ENCODE measurements at regions of chr2 and their contacts with region 1.

Region 1: GRCh38 chr2:209960676-209961630 is 41.5 kb upstream of the RPE start:
- DNase-seq: peak; percentile 60
- H3K4me3 Mint-ChIP-seq: no peak overlapping the region
- H3K27ac Mint-ChIP-seq: no peak overlapping the region
- H3K4me1 Mint-ChIP-seq: peaks cover 9% of the 10 kb centered on the region
- H3K27me3 Mint-ChIP-seq: no peaks in the 10 kb centered on the region
- CTCF ChIP-seq: peak; percentile 67

Region 2: GRCh38 chr2:209334198-209335017 is 626.5 kb before region 1 on chr2:
- CTCF ChIA-PET with region 1: interaction called, 3 read pairs
- intact Hi-C with region 1: loop called (anchors 10 kb)
- DNase-seq: peak; percentile 70
- H3K4me3 Mint-ChIP-seq: no peak overlapping the region
- H3K27ac Mint-ChIP-seq: no peak overlapping the region
- H3K4me1 Mint-ChIP-seq: no peaks in the 10 kb centered on the region
- H3K27me3 Mint-ChIP-seq: no peaks in the 10 kb centered on the region
- CTCF ChIP-seq: peak; percentile 82

Region 3: DNA sequence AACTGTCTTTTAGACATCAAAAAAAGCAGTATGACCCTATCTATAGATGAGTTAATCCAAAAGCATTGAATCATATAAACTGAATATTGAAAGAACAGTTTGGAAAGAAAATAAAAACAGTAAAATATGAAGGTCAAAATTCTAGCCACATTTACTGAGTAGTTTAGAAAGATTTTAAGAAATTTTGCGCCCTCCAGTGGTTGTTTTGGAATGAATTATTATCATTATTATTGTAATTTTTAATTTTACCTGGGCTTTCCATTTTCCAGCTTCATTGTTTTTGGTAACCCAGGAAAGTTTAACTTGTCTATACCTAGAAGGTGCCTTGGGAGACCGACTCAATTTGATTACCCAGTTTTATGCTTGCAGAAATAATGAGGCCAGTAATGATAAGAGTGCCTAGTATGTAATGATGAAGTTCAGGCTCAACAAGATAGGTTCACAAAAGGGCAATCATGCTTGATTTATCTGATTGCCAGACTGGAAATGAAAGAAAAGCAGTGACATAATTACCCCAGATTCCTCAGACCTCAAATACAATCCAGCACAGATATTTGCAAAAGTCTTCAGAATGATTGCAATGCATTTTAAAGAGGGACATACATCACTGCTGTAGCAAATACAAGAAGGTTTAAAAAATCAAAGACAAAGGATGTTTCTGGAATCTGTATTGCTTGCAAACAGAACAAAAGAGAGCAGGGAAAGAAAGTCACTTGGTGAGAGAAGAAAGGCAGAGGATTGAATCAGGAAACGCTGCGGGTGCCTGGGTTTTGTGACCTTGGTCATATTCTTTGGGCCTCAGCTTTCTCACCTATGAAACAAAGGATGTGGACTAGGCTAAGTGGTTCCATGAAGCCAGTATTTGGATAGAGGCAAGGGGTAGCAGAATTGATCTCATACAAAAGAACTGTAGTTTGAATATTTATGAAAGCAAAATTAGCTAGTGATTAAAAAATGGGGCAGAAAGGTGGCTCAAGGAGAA is 383.3 kb before region 1 on chr2:
- CTCF ChIA-PET with region 1: interaction called, 3 read pairs
- intact Hi-C with region 1: loop called (anchors 5 kb)
- DNase-seq: peak; percentile 20
- H3K4me3 Mint-ChIP-seq: no peak overlapping the region
- H3K27ac Mint-ChIP-seq: no peak overlapping the region
- H3K4me1 Mint-ChIP-seq: no peaks in the 10 kb centered on the region
- H3K27me3 Mint-ChIP-seq: no peaks in the 10 kb centered on the region
- CTCF ChIP-seq: peak; percentile 32

Region 4: GRCh38 chr2:209791151-209791550 is 169.8 kb before region 1 on chr2:
- CTCF ChIA-PET with region 1: interaction called, 5 read pairs
- intact Hi-C with region 1: loop called (anchors 2 kb)
- DNase-seq: no peak
- H3K4me3 Mint-ChIP-seq: no peak overlapping the region
- H3K27ac Mint-ChIP-seq: no peak overlapping the region
- H3K4me1 Mint-ChIP-seq: peaks cover 15% of the 10 kb centered on the region
- H3K27me3 Mint-ChIP-seq: no peaks in the 10 kb centered on the region
- CTCF ChIP-seq: no peak

Region 5: GRCh38 chr2:209806318-209806717 is 154.6 kb before region 1 on chr2:
- CTCF ChIA-PET with region 1: no interaction called
- intact Hi-C with region 1: no loop called
- DNase-seq: no peak
- H3K4me3 Mint-ChIP-seq: no peak overlapping the region
- H3K27ac Mint-ChIP-seq: no peak overlapping the region
- H3K4me1 Mint-ChIP-seq: no peaks in the 10 kb centered on the region
- H3K27me3 Mint-ChIP-seq: no peaks in the 10 kb centered on the region
- CTCF ChIP-seq: no peak

Region 6: GRCh38 chr2:209901172-209901571 is 59.8 kb before region 1 on chr2:
- CTCF ChIA-PET with region 1: no interaction called
- intact Hi-C with region 1: no loop called
- DNase-seq: no peak
- H3K4me3 Mint-ChIP-seq: no peak overlapping the region
- H3K27ac Mint-ChIP-seq: no peak overlapping the region
- H3K4me1 Mint-ChIP-seq: no peaks in the 10 kb centered on the region
- H3K27me3 Mint-ChIP-seq: no peaks in the 10 kb centered on the region
- CTCF ChIP-seq: no peak

Region 7: GRCh38 chr2:209946539-209946938 is 14.4 kb before region 1 on chr2:
- CTCF ChIA-PET with region 1: interaction called, 10 read pairs
- intact Hi-C with region 1: no loop called
- DNase-seq: no peak
- H3K4me3 Mint-ChIP-seq: no peak overlapping the region
- H3K27ac Mint-ChIP-seq: no peak overlapping the region
- H3K4me1 Mint-ChIP-seq: peaks cover 14% of the 10 kb centered on the region
- H3K27me3 Mint-ChIP-seq: no peaks in the 10 kb centered on the region
- CTCF ChIP-seq: no peak